ENCODE measurements at regions of chr2 and their contacts with region 1.

Region 1: GRCh38 chr2:99489761-99490622 is at the start of gene REV1:
- DNase-seq: peak; percentile 95
- ATAC-seq: peak; percentile 94
- total RNA-seq, gene REV1: 49.8 TPM

Region 2: DNA sequence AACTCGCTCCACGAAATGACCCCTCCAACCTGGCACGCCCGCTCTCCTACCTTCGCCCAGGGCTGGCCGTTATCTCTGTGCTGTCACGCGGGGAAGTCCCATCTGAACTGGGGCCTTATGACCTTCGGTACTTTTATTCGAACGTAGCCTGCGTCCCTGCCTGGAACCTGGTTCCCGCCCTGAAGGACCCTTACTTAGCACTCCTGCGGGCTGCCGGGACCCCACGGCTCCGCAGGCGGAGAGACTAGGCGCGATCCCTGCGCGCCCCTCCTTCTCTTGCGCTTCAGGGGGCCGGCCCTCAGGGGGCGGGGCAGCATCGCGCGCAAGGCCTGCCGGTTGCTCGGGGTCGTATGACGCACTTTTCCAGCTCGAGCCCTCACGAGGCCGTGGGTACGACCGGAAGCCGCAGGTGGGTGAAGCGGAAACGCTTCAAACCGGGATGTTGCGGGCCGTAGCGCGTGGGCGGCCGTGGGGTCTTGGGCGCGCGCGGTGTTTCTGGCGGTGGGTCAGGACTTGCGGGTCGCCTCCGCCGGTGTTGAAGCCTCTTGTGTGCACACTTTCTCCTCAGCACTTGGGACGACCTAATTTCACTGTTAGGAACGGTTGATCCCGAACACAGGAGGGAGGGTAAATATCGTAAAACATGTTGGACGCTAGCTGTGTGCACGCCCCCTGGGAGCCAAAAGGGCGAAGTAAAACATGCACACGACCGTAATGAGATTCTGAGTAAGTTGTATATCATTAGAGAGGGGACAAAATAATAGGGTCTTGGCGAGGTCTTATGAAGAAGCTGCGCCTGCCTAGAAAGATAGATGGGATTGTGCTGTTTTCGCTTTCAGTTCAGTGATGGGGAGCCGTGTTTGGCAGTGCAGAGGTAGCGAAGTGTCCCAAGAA is 335.1 kb before region 1 on chr2 and contains the starts of genes LIPT1 and TSGA10:
- intact Hi-C with region 1: loop called (anchors 10 kb)
- DNase-seq: peak; percentile 94
- ATAC-seq: peak; percentile 99
- total RNA-seq, gene LIPT1: 7.4 TPM
- total RNA-seq, gene TSGA10: 3.3 TPM

Region 3: DNA sequence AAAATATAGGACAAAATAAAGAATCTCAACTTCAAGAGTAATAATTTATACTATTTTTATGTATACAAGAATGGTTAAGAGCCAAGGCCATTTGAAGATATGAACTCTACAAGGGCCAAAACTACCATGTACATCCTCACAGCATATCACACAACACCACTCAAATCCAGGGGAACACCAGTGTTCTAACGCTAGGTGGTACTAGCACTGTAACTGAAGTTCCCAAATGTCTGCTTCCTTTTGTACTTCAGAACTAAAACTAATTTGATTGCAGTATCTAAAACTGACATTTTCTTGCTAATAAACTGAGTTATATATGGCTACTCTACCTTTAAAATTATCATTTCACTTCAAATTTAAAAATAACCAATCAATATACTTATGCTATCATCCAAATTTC is 47.2 kb before region 1 on chr2:
- intact Hi-C with region 1: loop called (anchors 2 kb)
- DNase-seq: no peak
- ATAC-seq: peak; percentile 60

Region 4: DNA sequence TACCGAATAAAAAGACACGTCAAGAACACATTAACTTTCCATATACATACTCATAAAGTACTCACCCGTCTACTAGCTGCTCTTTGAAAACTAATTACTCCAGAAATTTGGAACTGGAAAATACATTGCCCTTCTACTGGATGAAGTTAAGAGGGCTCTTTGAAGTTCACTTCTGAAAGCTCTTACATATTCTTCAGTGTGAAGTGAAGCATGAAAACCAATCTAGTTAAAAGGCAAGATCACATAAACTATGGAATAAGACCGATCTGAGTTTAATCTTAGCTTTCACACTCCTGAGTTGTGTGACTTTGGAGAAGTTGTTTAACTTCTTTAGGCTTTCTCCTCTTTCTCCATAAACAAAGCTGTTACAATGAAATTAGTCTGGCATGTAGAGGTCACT is 38.7 kb before region 1 on chr2:
- intact Hi-C with region 1: loop called (anchors 2 kb)
- DNase-seq: no peak
- ATAC-seq: no peak

Measured in Right ventricle myocardium inferior (tissue), 1 donor.